Activated naive CD4-positive, alpha-beta T cell treated with anti-CD3 and anti-CD28 coated beads for 36 hours (primary cell): ENCODE measurements at regions of chr20 and their contacts with region 1.

Region 1: DNA sequence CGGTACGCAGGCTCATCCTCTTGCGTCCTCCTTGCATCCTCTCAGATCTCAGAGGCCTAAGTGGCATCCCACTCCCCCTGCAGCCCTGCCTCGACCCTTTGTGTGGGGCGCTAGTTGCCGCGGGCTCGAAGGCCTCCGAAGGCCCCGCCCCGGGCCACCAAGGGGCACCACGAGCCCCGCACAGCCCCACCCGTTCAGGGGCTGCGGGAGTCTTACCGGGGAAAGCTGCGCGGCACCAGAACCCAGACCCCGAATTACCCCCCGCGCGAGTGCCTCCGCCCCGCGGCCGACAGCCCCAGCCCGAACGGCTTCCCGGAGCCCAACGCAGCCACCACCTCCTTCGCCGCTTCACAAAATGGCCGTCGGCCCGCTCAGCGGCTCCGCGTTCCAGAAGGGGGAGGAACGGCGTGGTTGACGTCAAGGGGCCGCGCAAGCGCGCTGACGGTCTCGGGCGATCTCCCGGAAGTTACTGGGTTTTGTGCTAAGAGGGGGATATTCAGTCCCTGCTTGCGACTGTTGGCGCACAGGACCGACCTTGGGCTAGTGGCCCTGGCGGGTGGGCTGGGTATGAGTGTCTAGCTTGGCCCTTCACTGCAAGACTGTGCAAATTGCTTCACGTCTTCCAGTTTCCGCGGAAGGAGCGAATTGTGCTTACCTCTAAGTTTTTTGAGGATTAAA is at the starts of genes CPNE1 and RBM12:
- DNase-seq: peak; percentile 95
- H3K4me3 Mint-ChIP-seq: peak within 1 kb of the TSS; percentile 95
- H3K27ac Mint-ChIP-seq: peak within 1 kb of the TSS; percentile 99
- H3K4me1 Mint-ChIP-seq: peaks cover 36% of the 10 kb centered on the region
- H3K27me3 Mint-ChIP-seq: no peaks in the 10 kb centered on the region
- total RNA-seq, gene CPNE1: 261 to 281 TPM
- total RNA-seq, gene RBM12: 106 to 110 TPM

Region 2: GRCh38 chr20:34825530-34826362 is 838.9 kb before region 1 on chr20 and contains the start of gene NCOA6:
- CTCF ChIA-PET with region 1: no interaction called
- intact Hi-C with region 1: loop called (anchors 10 kb)
- DNase-seq: peak; percentile 88
- H3K4me3 Mint-ChIP-seq: peak within 1 kb of the TSS; percentile 97
- H3K27ac Mint-ChIP-seq: peak within 1 kb of the TSS; percentile 93
- H3K4me1 Mint-ChIP-seq: peaks cover 37% of the 10 kb centered on the region
- H3K27me3 Mint-ChIP-seq: no peaks in the 10 kb centered on the region
- total RNA-seq, gene NCOA6: 13.9 to 14.1 TPM

Region 3: DNA sequence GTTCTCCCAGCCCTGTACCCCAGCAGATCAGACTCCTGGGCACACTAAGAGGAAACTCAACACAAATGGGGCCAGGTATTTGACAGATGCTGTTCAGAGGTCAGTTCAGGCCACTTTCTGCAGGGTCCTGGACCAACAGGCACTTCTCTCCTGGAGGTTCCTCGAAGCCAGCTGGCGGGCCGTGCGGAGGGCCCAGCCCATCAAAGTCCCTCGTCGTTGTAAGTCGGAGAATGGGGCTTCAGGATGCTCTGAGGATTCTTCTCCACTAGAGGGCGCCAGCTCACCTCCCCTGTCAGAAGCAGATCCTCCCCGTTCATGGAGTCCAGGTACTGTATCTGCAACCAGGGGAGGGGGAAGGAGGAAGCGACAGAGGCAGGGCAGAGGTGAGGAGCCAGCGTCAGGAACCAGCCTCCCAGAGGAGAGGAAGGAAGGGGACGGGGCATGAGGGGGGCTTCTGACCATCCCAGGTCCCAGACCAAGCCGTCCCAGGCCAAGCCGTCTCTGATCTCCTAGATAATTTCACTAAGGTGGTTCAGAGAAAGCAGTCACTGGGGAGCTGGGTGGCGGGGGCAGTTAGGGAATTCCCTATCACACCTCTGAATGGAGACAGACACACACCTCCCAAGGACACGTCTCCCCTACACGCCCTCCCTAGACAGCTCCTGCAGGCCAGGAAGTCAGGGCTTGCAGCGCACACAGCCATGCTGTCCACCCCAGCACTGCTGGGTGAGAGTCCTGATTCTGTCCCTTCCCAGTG is 360.8 kb before region 1 on chr20:
- CTCF ChIA-PET with region 1: no interaction called
- intact Hi-C with region 1: loop called (anchors 2 kb)
- DNase-seq: peak; percentile 95
- H3K4me3 Mint-ChIP-seq: no peak overlapping the region
- H3K27ac Mint-ChIP-seq: peak overlapping the region; percentile 10
- H3K4me1 Mint-ChIP-seq: peaks cover 54% of the 10 kb centered on the region
- H3K27me3 Mint-ChIP-seq: no peaks in the 10 kb centered on the region

Region 4: DNA sequence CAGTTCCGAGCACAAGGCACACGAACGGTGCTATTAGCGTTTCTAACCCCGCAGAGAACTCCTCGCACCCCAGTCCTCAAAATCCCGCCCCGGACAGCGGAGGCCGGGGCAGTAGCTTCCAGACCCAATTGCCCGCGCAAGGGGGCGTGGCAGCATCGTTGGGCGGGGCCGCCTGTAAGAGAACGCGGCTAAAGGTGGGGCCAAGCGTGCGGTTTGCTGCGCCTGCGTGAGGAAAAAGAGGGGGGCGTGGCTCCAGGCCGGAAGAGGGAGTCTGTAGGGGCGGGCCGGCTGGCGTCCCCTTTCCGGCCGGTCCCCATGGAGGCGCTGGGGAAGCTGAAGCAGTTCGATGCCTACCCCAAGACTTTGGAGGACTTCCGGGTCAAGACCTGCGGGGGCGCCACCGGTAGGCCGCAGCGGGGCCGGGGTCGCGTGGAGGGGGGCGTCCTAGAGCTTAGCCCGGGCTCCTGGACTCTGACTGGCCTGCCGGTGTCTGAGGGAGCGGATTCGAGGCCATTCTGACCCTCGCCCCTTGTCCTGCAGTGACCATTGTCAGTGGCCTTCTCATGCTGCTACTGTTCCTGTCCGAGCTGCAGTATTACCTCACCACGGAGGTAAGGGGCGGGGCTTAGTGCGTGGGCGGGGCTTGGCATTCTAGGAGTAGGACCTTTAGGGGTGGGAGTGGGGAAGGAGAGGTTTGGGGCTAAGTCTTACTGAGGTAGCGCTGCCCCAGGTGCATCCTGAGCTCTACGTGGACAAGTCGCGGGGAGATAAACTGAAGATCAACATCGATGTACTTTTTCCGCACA is 122.7 kb before region 1 on chr20 and contains the start of gene ERGIC3:
- CTCF ChIA-PET with region 1: no interaction called
- intact Hi-C with region 1: loop called (anchors 5 kb)
- DNase-seq: peak; percentile 98
- H3K4me3 Mint-ChIP-seq: peak within 1 kb of the TSS; percentile 86
- H3K27ac Mint-ChIP-seq: peak within 1 kb of the TSS; percentile 80
- H3K4me1 Mint-ChIP-seq: peaks cover 19% of the 10 kb centered on the region
- H3K27me3 Mint-ChIP-seq: no peaks in the 10 kb centered on the region
- total RNA-seq, gene ERGIC3: 107 to 113 TPM

Region 5: DNA sequence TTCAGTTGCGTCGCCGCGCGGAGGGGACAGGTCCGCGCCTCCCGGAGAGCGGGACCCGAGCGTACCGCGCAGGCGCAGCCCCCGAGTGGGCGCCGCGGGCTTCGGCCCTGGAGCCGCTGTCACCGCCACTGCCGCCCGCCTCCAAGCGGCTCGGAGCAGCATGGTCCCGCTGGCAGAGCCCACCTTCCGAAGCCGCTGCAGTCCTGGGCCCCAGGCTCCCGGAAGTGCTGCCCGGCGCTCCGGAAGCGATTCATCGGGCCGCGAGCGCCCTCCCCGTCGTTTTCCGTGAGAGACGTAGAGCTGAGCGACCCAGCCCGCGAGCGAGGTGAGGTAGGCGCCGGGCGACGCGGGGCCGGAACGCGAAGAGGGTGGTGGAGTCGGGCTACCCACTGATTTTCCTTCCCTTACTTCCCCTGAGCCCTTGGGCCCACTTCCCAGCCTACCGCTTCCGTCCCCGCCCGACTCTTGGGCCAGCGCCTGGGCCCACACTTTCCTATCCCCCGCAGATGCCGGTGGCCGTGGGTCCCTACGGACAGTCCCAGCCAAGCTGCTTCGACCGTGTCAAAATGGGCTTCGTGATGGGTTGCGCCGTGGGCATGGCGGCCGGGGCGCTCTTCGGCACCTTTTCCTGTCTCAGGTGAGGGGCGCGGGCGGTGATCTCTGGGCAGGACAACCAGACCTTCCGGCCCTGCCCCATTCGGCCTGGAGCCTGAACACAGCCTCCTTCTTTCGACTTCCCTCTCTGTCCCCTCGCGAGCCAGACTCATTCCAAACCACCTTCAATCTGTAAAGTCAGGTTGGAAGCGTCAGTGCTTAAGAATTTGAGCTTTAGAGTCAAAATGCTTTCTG is 34.7 kb after region 1 on chr20 and contains the starts of genes NFS1 and ROMO1:
- CTCF ChIA-PET with region 1: interaction called, 4 read pairs
- intact Hi-C with region 1: loop called (anchors 1 kb)
- DNase-seq: peak; percentile 89
- H3K4me3 Mint-ChIP-seq: peak within 1 kb of the TSS; percentile 93
- H3K27ac Mint-ChIP-seq: peak within 1 kb of the TSS; percentile 92
- H3K4me1 Mint-ChIP-seq: peaks cover 40% of the 10 kb centered on the region
- H3K27me3 Mint-ChIP-seq: no peaks in the 10 kb centered on the region
- total RNA-seq, gene NFS1: 33.6 to 38.1 TPM
- total RNA-seq, gene ROMO1: 120 to 134 TPM

Region 6: DNA sequence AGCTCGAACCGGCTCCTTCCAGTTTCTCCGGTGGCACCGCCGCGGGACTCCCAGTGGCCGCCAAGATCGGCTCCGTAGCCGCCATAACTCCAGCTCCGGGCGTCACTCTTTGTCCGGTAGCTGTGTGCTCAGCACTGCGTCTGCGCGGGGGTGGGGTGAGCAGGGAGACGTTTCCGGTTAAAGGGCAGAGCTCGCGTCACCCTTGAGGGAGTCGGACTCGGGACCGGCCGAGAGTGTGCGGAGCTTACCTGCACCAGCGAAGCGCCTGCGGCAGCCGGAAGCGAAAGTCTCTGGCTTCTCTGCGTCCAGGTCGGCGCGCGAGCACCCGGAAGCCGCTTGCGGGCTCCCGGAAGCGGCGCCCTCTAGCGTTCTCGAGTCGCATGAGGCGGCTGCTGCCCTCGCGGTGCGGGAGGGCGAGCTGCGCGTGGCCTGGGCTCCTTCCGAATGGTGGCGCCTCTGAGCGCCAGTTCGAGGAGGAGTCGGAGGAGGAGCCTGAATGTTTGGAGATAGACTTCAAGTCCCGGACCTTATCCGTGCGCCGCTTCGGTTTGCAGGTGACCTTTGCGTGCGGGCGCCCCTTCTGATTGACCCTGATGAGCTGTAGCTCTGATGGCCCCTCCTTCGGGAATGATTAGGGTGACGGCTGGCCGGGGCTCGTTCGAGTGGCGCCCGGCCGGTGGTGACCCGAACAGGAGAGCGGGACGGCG is 289.7 kb after region 1 on chr20 and contains the start of gene SCAND1:
- CTCF ChIA-PET with region 1: interaction called, 8 read pairs
- intact Hi-C with region 1: loop called (anchors 1 kb)
- DNase-seq: peak; percentile 98
- H3K4me3 Mint-ChIP-seq: peak within 1 kb of the TSS; percentile 99
- H3K27ac Mint-ChIP-seq: peak within 1 kb of the TSS; percentile 98
- H3K4me1 Mint-ChIP-seq: peaks cover 16% of the 10 kb centered on the region
- H3K27me3 Mint-ChIP-seq: no peaks in the 10 kb centered on the region
- total RNA-seq, gene SCAND1: 41.9 to 43.1 TPM